ENCODE measurements at regions of chr10 and their contacts with region 1.

Region 1: GRCh38 chr10:132413226-132414205 is 16.5 kb downstream of the PWWP2B start:
- DNase-seq: no peak
- ATAC-seq: no peak
- H3K4me3 ChIP-seq: no peak overlapping the region
- H3K27ac ChIP-seq: peak overlapping the region; percentile 2 to 51 (median 30)
- H3K4me1 ChIP-seq: peaks cover 20 to 32% of the 10 kb centered on the region in 2 donors
- H3K27me3 ChIP-seq: no peaks in the 10 kb centered on the region
- CTCF ChIP-seq: no peak
- POLR2A ChIP-seq: no peak

Region 2: GRCh38 chr10:132142411-132143161 is 270.9 kb before region 1 on chr10:
- in situ Hi-C with region 1: no loop called
- intact Hi-C with region 1: no loop called
- DNase-seq: no peak
- ATAC-seq: peak; percentile 66 to 74
- H3K4me3 ChIP-seq: no peak overlapping the region
- H3K27ac ChIP-seq: no peak overlapping the region
- H3K4me1 ChIP-seq: no peaks in the 10 kb centered on the region
- H3K27me3 ChIP-seq: no peaks in the 10 kb centered on the region
- CTCF ChIP-seq: peak; percentile 49 to 91 (median 83)
- POLR2A ChIP-seq: no peak

Region 3: DNA sequence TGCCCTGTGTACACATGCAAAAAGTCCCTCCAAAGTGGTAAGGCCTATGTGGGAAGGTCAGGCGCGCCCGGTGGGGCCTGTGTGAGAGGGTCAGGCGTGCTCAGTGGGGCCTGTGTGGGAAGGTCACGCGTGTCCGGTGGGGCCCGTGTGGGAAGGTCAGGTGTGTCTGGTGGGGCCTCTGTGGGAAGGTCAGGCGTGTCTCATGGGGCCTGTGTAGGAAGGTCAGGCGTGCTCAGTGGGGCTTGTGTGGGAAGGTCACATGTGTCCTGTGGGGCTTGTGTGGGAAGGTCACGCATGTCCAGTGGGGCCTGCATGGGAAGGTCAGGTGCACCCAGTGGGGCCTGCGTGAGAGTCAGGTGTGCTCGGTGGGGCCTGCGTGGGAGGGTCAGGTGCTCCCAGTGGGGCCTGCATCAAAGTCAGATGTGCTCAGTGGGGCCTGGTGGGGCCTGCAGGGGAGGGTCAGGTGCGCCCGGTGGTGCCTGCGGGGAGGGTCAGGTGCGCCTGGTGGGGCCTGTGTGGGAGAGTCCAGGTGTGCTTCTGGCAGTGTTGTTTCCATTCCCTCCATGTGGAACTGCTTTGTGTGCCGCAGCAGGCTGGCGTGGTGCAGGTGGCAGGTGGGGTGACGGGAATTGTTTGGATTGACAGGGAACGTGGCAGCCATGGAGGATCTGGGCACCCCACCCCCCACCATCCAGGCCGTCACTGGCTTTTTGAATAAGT is 66.1 kb before region 1 on chr10:
- in situ Hi-C with region 1: no loop called
- intact Hi-C with region 1: no loop called
- DNase-seq: no peak
- ATAC-seq: no peak
- H3K4me3 ChIP-seq: no peak overlapping the region
- H3K27ac ChIP-seq: no peak overlapping the region
- H3K4me1 ChIP-seq: no peaks in the 10 kb centered on the region
- H3K27me3 ChIP-seq: no peaks in the 10 kb centered on the region
- CTCF ChIP-seq: no peak
- POLR2A ChIP-seq: no peak

Region 4: DNA sequence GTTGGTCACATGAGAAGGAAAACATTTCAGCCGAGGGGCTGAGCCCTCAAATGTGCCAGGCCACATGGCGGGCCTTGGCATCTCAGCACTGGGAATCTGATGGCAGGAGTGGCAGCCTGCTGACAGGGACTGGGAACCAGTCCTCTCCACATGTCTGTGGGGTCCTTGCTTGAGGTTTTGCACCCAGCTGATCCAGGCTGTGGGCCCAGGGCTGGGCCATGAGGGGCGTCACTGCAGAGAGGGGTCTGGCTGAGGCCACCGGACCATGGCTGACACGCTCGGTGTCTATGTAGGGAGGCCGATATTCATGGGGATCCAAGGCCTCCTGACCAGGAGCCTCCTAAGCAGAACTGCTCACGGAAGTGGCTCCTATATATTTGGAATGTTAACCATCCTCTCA is 47.5 kb before region 1 on chr10:
- in situ Hi-C with region 1: no loop called
- intact Hi-C with region 1: loop called (anchors 2 kb)
- DNase-seq: no peak
- ATAC-seq: no peak
- H3K4me3 ChIP-seq: no peak overlapping the region
- H3K27ac ChIP-seq: no peak overlapping the region
- H3K4me1 ChIP-seq: no peaks in the 10 kb centered on the region
- H3K27me3 ChIP-seq: no peaks in the 10 kb centered on the region
- CTCF ChIP-seq: no peak
- POLR2A ChIP-seq: no peak

Region 5: DNA sequence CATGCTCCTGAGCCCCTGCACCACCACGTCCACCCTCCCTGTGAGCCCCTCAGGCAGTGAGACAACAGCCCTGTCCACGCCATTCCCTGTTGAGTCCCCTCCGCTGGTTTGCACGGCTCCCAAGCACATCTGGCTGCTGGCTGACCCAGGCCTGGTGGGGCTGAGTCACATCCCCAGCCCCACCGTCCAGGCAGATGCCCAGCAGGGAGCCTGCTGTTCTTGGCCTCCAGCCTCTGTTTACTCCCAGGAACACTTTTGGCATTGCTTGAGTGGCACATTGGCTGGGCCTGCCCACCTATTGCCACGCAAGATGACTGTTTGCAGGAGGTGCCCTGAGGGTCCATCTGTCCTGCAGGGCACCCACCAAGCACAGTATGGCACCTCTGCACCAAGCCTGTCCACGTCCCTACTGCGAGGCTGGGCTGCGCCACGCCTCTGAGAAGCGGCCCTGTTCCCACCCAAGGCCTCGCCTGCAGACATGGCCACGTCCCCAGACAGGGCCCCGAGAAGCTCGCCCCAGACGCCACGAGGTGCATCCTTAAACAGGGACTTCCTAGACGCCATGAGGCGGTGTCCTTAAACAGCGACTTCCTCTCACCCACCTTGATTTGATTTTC is 75.7 kb after region 1 on chr10:
- in situ Hi-C with region 1: no loop called
- intact Hi-C with region 1: no loop called
- DNase-seq: peak in 1 of 2 donors; percentile 9
- ATAC-seq: peak in 1 of 2 donors; percentile 33
- H3K4me3 ChIP-seq: no peak overlapping the region
- H3K27ac ChIP-seq: no peak overlapping the region
- H3K4me1 ChIP-seq: no peaks in the 10 kb centered on the region
- H3K27me3 ChIP-seq: no peaks in the 10 kb centered on the region
- CTCF ChIP-seq: no peak
- POLR2A ChIP-seq: no peak

Measured in gastrocnemius medialis (tissue), 4 donors.